Ascending aorta (tissue), 2 donors: ENCODE measurements at regions of chr1 and their contacts with region 1.

Region 1: DNA sequence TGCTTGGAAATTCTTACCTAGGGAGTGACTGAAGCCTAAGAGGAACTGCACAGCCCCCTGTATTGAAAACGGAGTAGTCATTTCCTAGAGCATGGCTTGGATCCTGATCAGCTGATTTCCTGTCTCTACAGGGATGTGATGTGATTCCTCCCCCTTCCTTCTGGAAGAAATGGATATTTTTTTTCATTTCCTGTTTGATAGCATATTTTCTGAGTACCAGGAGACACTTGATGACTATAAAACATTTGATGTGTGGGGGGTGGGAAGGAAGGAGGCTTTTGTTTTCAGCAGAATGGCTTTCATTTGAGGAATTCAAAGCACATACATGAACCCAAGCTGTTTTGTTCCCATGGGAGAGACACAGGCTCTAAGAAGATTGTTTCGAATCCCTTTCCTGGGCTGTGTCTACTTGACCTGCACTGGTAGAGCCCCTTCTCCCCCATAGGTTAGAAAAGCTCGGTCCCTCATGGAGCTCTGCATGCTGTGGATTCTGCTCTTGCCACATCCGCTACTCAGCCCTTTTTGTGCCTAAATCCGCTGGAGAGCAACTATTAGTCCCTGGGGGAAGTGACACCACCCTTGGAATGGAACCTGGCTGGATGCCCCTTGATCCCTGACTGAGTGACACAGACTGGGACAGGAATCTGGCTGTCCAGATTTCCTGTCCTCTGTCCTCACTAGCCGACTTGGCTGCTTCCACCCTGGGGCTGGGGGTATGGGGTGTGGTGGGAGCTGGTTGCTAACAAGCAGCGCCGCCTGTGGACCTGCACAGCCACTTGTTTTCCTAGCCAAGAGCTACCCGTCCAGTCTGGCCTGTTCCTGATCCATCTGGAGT is 71.8 kb upstream of the MACF1 start:
- DNase-seq: peak; percentile 11 to 89
- H3K4me3 ChIP-seq: peak overlapping the region in 1 of 2 donors; percentile 39
- H3K27ac ChIP-seq: peak overlapping the region; percentile 71 to 73
- H3K4me1 ChIP-seq: peaks cover 4 to 33% of the 10 kb centered on the region in 2 donors
- H3K27me3 ChIP-seq: no peaks in the 10 kb centered on the region
- CTCF ChIP-seq: peak in 2 of 3 experiments; percentile 29 to 53

Region 2: GRCh38 chr1:39110325-39110851 is 22.3 kb before region 1 on chr1:
- intact Hi-C with region 1: loop called (anchors 2 kb)
- DNase-seq: peak in 1 of 2 donors; percentile 83
- H3K4me3 ChIP-seq: no peak overlapping the region
- H3K27ac ChIP-seq: peak overlapping the region; percentile 86 to 95
- H3K4me1 ChIP-seq: peaks cover 8 to 69% of the 10 kb centered on the region in 2 donors
- H3K27me3 ChIP-seq: no peaks in the 10 kb centered on the region
- CTCF ChIP-seq: no peak